ENCODE measurements at regions of chr19 and their contacts with region 1.

Region 1: DNA sequence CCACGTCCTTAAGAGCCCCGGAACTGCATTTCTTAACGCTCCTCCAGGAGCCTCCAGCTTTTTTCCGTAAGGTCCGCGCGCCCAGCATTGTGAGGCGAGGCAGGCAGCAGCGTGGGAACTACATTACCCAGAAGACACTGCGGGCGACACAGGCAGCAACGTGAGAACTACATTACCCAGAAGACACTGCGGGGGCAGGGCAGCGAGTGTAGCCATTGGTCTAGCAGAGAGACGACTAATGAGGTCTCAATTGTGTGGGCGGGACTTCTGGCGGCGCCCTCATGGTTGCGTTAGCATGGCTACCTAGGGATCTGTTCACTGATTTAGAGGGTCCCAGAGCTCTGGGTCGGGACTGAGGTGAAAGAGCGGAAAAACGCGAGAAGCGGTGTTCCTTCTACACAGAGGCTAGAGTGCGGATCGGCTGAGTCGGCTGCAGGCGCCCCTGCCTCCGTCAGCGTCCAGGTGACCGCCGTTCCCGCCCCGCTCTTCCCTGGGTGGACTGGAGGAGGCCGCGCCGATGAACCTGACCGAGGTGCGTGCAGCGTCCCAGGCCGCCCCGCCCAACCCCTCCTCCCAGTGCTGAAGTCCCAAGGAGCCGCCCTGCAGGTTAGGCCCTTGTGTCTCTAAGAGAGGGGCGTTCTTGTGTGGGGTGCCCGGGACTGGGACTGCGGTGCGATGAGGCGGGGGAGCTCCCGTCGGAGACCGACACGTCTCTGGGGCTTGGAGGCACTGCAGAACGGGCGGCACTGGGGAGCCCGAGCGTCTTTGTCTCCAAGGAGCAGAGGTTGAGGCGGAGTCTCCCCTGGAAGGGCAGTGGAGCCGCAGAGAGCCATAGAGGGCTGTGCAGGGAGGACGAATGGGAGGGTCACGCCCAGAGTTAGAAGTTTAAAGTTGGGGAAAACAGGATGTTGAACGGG is at the start of gene ZNF749:
- DNase-seq: peak; percentile 95
- H3K4me3 Mint-ChIP-seq: peak within 1 kb of the TSS; percentile 93
- H3K27ac Mint-ChIP-seq: peak within 1 kb of the TSS; percentile 95
- H3K4me1 Mint-ChIP-seq: peaks cover 23% of the 10 kb centered on the region
- H3K27me3 Mint-ChIP-seq: no peaks in the 10 kb centered on the region
- total RNA-seq, gene ZNF749: 21.5 and 22.0 TPM in 2 replicates

Region 2: DNA sequence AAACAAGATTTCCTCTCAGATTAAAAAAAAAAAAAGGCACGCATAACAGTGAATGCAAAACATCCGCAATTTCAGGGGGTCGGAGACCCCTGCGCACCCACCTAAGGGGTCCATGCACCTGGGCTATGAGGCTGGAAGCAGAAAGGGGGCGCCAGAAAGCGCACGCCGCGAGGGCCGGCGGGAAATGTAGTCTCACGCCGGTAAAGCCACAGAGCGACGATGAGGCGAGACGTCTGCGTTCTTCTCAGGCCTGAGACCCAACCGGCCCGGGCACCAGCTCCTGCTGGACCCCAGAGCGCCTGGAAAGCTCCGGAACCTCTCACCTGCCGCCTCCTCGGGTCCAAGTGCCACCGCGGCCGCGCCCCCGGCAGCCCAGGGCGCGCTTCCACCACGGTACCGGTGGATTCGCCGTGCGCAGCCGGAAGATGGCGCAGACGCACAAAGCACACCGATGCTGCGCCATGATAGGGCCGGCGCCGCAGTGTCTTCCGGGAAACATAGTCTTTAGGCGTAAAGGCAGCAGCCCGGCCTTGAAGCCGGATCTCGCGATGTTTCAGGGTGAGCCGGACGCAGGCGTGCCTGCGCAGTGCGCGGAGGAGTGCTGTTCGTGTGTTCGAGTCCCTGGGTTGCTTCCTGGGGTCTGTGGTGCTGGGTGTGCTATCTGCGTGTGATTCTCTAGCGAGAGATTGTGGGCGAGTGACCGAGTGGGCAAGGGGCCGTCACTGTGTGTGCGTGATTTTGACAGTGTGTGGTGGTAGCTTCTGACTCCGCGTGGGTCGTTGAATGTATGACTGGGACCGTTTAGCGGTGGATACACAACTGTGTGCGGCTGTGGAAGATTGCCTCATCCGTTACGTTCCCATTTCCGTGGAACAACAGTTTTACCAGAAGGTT is 1042.0 kb before region 1 on chr19 and contains the start of gene ZNF582:
- intact Hi-C with region 1: loop called (anchors 5 kb)
- DNase-seq: peak; percentile 82
- H3K4me3 Mint-ChIP-seq: peak within 1 kb of the TSS; percentile 94
- H3K27ac Mint-ChIP-seq: peak within 1 kb of the TSS; percentile 90
- H3K4me1 Mint-ChIP-seq: peaks cover 7% of the 10 kb centered on the region
- H3K27me3 Mint-ChIP-seq: peaks cover 1% of the 10 kb centered on the region
- total RNA-seq, gene ZNF582: 1.2 and 1.3 TPM in 2 replicates

Region 3: GRCh38 chr19:57350877-57351805 is 84.2 kb before region 1 on chr19 and contains the start of gene ZNF304:
- intact Hi-C with region 1: loop called (anchors 1 kb)
- DNase-seq: peak; percentile 84
- H3K4me3 Mint-ChIP-seq: peak within 1 kb of the TSS; percentile 92
- H3K27ac Mint-ChIP-seq: peak within 1 kb of the TSS; percentile 90
- H3K4me1 Mint-ChIP-seq: peaks cover 29% of the 10 kb centered on the region
- H3K27me3 Mint-ChIP-seq: no peaks in the 10 kb centered on the region
- total RNA-seq, gene ZNF304: 6.1 and 6.6 TPM in 2 replicates

Region 4: DNA sequence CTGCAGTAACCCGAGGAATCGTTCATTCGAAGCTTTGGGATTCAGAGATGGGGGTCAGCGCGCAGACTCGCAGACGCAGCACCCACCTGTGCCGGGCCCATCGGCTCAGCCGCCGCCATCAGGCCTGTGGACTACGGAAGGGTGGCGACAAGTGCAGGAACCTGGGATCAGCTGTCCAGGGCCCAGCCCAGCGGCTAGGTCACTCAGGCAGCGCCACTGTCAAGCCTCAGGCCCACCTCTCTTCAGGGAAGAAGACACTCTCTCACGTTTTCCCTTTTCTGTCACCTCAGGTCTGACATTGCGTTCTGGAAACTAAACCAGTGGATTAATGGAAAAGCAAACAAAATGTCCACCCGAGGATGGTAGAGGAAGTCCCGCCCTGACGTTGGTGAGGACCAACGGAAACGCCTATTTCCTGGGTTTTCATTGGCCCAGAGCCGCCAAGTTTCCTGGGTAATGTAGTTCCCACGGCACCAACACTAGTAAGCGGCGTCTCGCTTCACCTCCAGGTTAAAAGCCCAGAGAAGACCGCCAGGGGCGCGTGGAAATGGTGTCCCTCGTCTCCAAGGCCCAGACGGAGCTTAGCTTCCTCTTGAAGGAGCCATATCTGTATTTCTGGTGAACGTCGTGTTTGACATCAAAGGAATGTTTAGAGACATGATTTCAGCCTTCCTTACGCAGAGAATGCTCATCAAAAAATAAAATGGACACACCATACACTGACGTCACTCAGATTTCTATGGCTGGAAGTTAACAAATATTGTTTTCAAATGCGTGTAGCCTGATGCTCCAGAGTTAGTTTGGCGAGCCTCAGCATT is 42.1 kb after region 1 on chr19 and contains the start of gene ZNF772:
- intact Hi-C with region 1: loop called (anchors 1 kb)
- DNase-seq: peak; percentile 80
- H3K4me3 Mint-ChIP-seq: peak within 1 kb of the TSS; percentile 90
- H3K27ac Mint-ChIP-seq: peak within 1 kb of the TSS; percentile 89
- H3K4me1 Mint-ChIP-seq: peaks cover 11% of the 10 kb centered on the region
- H3K27me3 Mint-ChIP-seq: no peaks in the 10 kb centered on the region
- total RNA-seq, gene ZNF772: 1.5 and 2.4 TPM in 2 replicates

Region 5: DNA sequence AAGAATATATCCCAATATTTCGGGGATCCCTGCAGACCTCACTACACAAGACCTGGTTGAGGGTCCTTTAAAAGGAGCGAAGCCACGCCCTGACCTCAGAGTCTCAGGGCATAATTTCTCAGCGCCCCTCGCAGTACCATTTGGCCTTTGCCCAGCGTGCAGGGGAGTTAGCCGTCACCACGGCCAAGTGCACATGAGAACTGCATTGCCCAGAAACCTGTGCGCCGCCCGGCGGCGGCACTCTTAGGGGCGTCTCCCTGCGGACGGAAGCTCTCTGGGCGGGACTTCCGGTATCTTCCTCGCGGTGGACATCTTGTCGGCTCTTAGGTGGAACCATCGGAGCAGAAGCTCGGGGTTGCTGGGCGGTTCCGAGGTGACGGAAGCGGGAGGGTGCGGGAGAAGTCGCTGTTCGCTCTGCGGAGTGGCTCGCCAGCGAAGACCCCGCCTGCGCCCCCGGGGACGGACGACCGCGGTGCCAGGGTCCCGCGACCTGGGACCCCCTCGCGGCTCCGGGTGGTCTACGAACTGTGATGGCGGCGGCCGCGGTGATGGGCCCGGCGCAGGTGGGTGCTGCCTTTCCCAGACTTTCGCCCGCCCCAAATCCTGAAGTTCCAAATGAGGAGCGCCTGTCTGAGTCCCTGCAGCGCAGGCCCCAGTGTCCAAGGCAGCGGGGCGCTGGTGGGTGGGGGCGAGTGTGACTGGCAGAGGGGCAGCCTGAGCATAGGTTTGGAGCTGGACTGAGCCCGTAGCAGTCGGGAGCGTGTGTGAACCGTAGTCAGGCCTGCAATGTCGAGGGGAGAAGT is 178.8 kb after region 1 on chr19 and contains the start of gene ZNF134:
- intact Hi-C with region 1: loop called (anchors 1 kb)
- DNase-seq: peak; percentile 84
- H3K4me3 Mint-ChIP-seq: peak within 1 kb of the TSS; percentile 90
- H3K27ac Mint-ChIP-seq: peak within 1 kb of the TSS; percentile 78
- H3K4me1 Mint-ChIP-seq: peaks cover 11% of the 10 kb centered on the region
- H3K27me3 Mint-ChIP-seq: no peaks in the 10 kb centered on the region
- total RNA-seq, gene ZNF134: 8.4 and 9.4 TPM in 2 replicates

Region 6: GRCh38 chr19:57819475-57820148 is 384.3 kb after region 1 on chr19:
- intact Hi-C with region 1: loop called (anchors 1 kb)
- DNase-seq: peak; percentile 76
- H3K4me3 Mint-ChIP-seq: peak overlapping the region; percentile 99
- H3K27ac Mint-ChIP-seq: peak overlapping the region; percentile 98
- H3K4me1 Mint-ChIP-seq: peaks cover 50% of the 10 kb centered on the region
- H3K27me3 Mint-ChIP-seq: no peaks in the 10 kb centered on the region

Region 7: DNA sequence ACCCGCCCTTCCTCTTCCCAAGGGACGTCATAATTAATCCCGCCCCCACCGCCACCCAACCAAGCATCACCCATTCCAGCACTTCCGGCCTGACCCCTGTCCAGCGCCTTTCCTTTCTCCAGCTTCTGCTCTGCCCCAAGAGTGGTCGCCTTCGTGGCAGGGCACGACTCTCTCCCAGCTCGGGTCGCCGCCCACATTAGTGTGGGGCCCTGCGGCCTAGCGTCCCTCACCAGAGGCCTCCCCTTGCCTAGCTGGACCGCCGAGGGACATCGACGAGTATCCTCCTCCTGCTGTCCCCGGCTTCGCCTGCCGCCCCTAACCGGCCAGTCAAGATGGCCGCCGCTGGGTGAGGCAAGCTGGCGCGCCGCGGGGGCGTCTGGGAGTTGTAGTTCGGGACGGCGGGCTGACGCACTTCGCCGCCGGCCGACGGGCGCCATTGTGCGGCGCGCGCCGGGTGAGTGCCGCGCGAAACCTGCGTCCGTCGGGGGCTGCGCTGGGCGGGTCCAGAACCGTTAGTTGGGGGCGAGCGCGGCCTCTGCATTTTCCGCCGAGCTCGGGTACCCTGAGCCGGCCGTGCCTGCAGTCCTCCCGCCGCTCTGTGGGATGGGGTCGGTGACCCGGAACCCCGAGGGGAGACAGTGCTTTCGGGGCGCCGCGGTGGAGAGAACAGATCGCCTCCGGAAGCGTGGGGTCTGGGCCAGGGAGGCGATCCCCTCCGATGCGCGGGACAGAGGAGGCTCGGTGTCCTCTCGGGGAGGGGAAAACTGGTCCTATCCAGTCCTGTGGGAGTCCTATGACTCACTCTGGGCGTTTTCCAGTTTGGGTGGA is 747.9 kb after region 1 on chr19 and contains the start of gene ZNF274:
- intact Hi-C with region 1: loop called (anchors 2 kb)
- DNase-seq: peak; percentile 90
- H3K4me3 Mint-ChIP-seq: peak within 1 kb of the TSS; percentile 93
- H3K27ac Mint-ChIP-seq: peak within 1 kb of the TSS; percentile 99
- H3K4me1 Mint-ChIP-seq: peaks cover 16% of the 10 kb centered on the region
- H3K27me3 Mint-ChIP-seq: no peaks in the 10 kb centered on the region
- total RNA-seq, gene ZNF274: 18.2 and 21.2 TPM in 2 replicates